PC-9 (cell line): ENCODE measurements at regions of chr10 and their contacts with region 1.

Region 1: DNA sequence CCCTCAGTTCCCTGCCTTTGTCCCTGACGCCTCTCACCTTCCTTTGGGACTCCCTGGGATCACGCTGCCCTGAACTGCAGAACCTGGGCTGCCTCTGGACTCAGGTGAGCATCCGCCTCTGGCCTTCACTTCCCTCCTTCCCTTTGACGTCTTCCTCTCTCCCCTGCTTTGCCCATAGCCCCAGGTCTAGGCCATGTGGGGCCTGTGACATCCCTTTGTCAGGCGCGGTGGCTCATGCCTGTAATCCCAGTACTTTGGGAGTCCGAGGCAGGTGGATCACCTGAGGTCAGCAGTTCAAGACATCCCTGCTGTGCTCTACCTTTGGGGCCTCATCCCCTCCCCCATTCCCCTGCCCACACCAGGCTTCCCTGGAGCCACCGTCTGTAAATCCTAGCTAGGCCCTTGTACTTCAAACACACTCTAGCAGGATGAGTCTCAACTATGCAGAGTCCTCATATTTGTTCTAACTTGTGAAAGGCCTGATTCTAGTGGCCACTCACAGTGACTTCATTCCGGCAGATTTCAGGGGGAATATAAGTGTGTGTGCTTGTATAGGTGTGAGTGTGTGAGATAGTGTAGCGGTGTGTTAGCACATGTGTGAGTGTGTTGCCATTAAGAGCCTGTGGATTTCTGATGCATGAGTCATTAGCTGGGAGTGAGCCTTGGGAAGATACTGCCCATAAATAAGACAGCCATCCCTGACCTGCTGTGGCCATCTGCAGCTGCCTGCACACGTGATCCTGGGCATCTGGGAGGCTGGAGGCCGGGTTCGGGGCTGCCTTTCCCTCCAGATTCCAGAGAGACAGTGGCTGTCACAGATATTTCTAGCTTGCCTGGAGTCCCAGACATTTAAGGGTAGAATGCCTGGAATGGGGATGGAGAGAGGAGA is 1.8 kb upstream of the NEURL1 start:
- DNase-seq: peak; percentile 41 to 63
- H3K4me3 ChIP-seq: no peak overlapping the region
- H3K27ac ChIP-seq: no peak overlapping the region
- H3K4me1 ChIP-seq: peaks cover 5% of the 10 kb centered on the region; the same call in 1 of the 2 replicates
- H3K27me3 ChIP-seq: no peaks in the 10 kb centered on the region; the same call in 1 of the 2 replicates
- CTCF ChIP-seq: no peak

Region 2: GRCh38 chr10:103413564-103413963 is 78.2 kb before region 1 on chr10:
- CTCF ChIA-PET with region 1: no interaction called
- POLR2A ChIA-PET with region 1: no interaction called
- intact Hi-C with region 1: no loop called
- DNase-seq: no peak
- H3K4me3 ChIP-seq: no peak overlapping the region
- H3K27ac ChIP-seq: no peak overlapping the region
- H3K4me1 ChIP-seq: no peaks in the 10 kb centered on the region
- H3K27me3 ChIP-seq: no peaks in the 10 kb centered on the region
- CTCF ChIP-seq: no peak

Region 3: DNA sequence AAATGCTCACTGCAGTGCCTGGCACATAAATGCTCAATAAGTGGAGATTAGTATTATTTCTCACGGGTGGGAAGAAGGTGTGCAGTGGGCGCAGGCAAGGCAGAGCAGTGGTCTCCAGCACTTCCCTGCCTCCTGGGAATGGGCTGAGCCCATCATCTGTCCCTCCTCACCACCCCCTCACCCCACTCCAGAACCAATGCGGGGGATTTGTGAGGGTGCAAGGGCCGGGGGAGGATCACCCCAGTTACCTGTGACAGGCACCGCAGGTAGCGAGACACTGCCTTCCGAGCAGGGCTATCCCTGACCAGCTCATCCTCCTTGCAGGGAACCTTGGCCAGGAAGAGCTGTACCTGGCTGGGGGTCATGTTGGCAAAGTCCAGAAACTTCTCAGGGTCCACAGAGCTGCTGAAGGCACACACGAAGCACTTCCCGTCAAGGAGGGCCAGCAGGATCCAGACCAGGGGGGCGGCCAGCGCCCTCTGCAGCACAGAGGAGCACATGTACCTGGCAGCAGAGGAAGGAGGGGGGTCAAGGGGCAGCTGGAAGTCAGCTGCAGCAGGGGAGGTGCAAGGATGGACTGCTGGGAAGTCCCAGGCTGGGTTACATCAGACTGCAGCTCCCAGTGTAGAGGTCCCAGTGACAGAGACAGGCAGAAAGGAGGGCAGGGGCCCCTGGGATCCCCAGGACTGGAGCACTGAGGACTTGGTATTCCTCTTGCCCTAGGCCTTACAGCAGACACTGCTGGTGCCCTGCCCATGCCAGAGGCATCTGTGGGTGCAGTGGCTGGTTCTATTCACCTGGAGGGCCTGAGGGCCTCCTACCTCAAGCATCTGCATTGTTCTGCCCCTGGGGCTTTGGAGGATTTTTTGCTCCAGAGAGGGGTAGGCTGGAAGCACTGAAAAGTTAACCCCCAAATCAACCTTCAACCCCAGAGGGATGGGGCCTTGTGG is 15.4 kb before region 1 on chr10:
- CTCF ChIA-PET with region 1: no interaction called
- POLR2A ChIA-PET with region 1: no interaction called
- intact Hi-C with region 1: no loop called
- DNase-seq: peak in 1 of 2 experiments; percentile 18
- H3K4me3 ChIP-seq: no peak overlapping the region
- H3K27ac ChIP-seq: no peak overlapping the region
- H3K4me1 ChIP-seq: peaks cover 57% of the 10 kb centered on the region
- H3K27me3 ChIP-seq: no peaks in the 10 kb centered on the region
- CTCF ChIP-seq: no peak; the same call in 1 of the 2 replicates

Region 4: GRCh38 chr10:103542764-103543616 is 51.3 kb after region 1 on chr10:
- CTCF ChIA-PET with region 1: interaction called, 4 read pairs
- POLR2A ChIA-PET with region 1: no interaction called
- intact Hi-C with region 1: loop called (anchors 10 kb)
- DNase-seq: no peak
- H3K4me3 ChIP-seq: no peak overlapping the region
- H3K27ac ChIP-seq: no peak overlapping the region
- H3K4me1 ChIP-seq: peaks cover 9% of the 10 kb centered on the region
- H3K27me3 ChIP-seq: no peaks in the 10 kb centered on the region
- CTCF ChIP-seq: no peak; the same call in 1 of the 2 replicates